ENCODE measurements at regions of chr3 and their contacts with region 1.

Region 1: DNA sequence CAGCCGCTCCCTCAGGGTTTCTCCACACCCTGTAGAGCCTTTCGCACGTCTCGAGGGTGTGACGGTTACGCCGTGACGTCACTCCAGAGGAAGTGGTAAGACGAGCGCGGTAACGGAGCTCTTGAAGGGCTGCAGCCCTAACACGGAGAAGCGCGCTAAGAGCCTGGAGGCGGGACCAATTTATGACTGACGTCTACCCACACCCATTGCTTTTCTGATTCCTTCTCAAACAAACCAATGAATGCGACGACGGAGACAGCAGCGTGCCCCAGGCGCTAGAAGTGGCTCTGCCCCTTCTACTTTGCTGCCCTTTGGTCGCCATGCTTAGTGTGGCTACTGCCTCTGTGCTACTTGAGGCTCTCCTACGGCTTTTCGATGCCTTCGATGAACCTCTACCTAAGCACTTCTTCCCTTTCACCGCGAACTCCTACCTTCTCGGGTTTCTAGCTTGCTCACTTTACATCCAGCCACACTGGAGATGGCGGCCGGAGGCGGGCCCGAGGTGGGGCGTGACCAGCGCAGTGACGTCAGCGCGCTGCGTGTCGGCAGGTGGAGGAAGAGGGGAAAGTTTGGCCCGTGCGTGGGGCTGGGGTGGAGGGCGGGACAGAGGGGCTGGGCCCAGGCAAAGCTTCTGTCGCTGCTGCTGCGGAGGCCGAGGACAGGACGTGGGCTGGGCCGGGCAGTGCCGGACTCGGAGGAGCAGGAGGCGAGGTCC is at the start of gene OXSR1:
- DNase-seq: peak; percentile 98 to 100
- H3K4me3 ChIP-seq: peak within 1 kb of the TSS; percentile 83 to 97
- H3K27ac ChIP-seq: peak within 1 kb of the TSS; percentile 94 to 98
- H3K4me1 ChIP-seq: peaks cover 0 to 24% of the 10 kb centered on the region in 2 donors
- H3K27me3 ChIP-seq: no peaks in the 10 kb centered on the region
- CTCF ChIP-seq: no peak
- total RNA-seq, gene OXSR1: 13.3 TPM

Region 2: DNA sequence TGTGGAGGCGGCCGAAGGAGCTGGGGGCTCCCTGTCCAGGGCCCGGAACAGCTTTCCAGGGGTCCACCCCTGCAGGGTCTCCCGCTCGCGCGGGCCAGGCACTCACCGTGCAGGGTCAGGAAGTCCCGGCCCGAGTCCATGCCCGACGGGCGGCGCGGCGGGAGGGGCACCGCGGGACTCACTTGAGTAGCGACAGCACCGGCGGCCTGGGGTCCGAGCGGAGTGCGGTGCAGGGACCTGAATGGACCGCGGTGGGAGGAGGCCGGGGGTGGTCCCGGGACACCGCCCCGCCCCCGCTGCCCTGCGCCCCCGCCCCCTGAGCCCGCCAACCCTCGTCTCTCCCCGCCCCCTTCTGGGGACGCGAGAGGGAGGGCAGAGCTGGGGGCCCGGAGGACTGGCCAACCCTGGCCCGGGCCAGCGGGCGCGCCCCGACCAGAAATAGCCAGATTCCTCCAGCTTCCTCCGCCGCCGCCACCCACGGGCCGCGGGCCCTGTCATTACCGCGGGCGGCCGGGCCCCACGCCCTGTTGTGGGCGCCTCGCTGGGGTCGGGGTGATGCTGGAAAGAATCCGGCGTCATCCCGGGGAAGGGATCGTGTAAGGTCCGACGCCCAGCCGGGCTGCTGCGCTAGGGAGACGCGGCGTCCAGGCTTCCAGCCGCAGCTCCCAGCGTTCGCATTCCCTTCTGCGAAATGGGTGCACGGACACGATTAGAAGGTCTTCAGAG is 135.6 kb before region 1 on chr3 and contains the start of gene PLCD1:
- intact Hi-C with region 1: loop called (anchors 2 kb)
- DNase-seq: peak; percentile 67 to 95
- H3K4me3 ChIP-seq: peak within 1 kb of the TSS; percentile 73 to 88
- H3K27ac ChIP-seq: peak within 1 kb of the TSS; percentile 91 to 97
- H3K4me1 ChIP-seq: peaks cover 25 to 36% of the 10 kb centered on the region in 2 donors
- H3K27me3 ChIP-seq: no peaks in the 10 kb centered on the region
- CTCF ChIP-seq: no peak
- total RNA-seq, gene PLCD1: 167 TPM

Region 3: DNA sequence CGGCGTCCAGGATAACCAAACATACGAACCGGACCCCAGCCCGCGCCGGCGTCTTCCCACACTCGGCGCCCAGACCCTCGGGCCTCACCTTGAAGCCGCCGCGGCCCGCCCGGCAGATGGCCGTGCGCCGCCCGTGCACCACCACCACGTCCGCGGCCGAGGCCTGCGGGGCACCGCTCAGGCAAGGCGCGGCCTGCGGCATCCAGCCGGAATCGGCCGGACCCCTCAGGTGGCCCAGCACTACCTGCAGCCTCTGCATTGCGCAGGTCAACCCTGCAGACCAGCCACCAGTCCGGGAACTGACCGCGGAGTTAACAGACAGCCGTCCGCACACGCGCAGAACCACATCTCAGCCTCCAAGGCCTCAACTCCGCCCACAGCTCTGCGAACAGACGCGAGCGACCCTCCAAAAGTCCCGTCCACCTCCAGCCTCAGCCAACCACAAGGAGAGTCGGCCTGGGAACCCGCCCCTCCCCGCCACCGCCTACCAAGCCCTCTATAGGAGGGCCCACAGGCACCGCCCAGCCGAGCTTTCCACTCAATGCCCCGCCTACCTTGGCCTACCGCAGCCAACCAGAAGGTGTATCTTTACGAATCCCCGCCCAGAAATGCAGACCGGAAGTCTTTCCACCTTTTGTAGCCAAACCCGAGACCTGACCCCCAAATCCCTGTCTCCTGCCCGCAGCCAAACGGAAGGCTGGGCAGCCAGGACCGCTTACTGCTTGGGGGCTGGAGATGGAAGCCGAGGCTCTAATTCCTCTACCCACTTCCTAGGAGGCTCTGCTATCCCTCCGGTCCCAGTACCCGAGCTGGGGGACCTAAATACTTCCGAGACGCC is 28.1 kb before region 1 on chr3 and contains the start of gene ACAA1:
- intact Hi-C with region 1: loop called (anchors 1 kb)
- DNase-seq: peak; percentile 99 to 100
- H3K4me3 ChIP-seq: peak within 1 kb of the TSS; percentile 87 to 98
- H3K27ac ChIP-seq: peak within 1 kb of the TSS; percentile 90 to 97
- H3K4me1 ChIP-seq: peaks cover 0 to 28% of the 10 kb centered on the region in 2 donors
- H3K27me3 ChIP-seq: no peaks in the 10 kb centered on the region
- CTCF ChIP-seq: no peak
- total RNA-seq, gene ACAA1: 52.6 TPM

Region 4: GRCh38 chr3:38227989-38228388 is 62.9 kb after region 1 on chr3:
- intact Hi-C with region 1: loop called (anchors 5 kb)
- DNase-seq: no peak
- H3K4me3 ChIP-seq: no peak overlapping the region
- H3K27ac ChIP-seq: no peak overlapping the region
- H3K4me1 ChIP-seq: peaks cover 0 to 5% of the 10 kb centered on the region in 2 donors
- H3K27me3 ChIP-seq: no peaks in the 10 kb centered on the region
- CTCF ChIP-seq: no peak

Measured in ascending aorta (tissue), 2 donors.